Activated T-helper 1 cell treated with anti-CD3 and anti-CD28 coated beads, Interleukin-12 subunit alpha, Interleukin-12 subunit beta, Interleukin-2, Interleukin-4 antibody, amounts not matched to agents 30 ng/mL and 10 ng/mL and 1 ng/mL, durations not matched to agents 14 hours and 24 hours and 36 hours (primary cell): ENCODE measurements at regions of chr16 and their contacts with region 1.

Region 1: DNA sequence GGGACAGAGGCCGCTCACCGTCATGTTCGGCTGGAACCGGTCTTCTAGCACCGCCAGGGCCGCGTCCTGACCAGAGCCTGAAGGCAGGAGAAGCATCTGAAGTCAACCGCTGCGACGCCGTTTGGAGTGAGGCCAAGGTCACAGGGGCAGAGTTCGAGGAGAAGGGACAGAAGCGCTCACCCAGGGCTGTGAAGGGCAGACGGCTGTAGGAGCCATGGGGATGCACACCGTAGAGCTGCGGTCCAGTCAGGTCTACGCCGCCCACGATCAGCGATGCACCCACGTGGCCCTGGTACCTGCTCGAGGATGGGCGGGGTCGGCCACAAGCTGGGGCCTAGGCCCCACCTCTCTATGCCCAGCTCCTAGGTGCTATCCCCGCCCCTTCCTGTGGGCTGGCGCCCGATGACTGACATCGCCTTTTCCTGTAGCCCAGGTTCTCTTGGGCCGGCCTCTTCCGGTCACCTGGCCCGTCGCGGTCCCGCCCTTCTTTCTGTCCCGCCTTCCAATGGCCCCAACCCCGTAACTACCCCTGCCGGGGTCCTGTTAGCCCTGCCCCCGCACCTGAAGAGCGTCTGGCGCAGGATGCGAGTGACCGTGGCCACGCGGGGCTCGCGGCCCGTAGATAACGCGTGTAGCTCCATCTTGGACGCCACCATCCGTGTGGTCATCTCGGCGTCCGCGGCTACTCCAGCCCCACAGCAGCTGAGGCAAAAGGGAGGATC is 1.1 kb downstream of the PSMB10 start:
- DNase-seq: peak; percentile 92
- H3K4me3 Mint-ChIP-seq: peak overlapping the region; percentile 98
- H3K27ac Mint-ChIP-seq: peak overlapping the region; percentile 96
- H3K4me1 Mint-ChIP-seq: peaks cover 37% of the 10 kb centered on the region
- H3K27me3 Mint-ChIP-seq: no peaks in the 10 kb centered on the region

Region 2: DNA sequence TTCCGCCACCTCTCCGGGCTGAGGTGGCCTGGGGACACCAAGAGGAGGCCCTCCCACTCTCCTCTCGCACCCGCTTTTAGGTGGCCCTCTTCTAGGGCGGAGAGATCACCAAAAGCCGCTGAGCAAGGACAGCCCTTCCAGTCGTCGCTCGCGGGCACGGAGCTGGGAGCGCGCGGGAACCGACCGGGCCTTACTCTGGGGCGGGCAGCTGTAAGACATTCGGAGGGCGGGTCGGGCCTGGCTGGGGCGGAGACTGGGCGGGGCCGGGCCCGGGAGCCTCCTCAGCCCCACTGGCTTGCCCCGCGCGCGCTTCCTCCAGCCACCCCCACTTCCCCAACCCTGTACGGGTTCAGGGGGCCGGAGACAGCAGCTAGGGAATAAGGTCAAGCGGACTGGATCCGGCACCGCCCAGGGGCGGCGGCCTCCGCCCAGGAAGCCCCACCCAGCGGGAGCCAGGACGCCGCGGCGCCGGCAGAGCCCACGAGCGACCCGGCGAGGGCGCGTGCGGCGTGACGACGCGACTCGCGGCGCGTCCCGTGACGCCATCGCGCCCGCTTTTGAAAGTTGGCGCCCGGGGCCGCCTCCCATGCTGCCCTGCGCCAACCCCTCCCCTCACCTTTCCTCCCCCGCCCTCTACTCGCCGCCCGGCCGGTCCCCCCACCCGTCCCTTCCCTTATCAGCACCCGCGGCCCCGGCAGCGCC is 373.6 kb before region 1 on chr16:
- intact Hi-C with region 1: loop called (anchors 1 kb)
- DNase-seq: peak; percentile 98
- H3K4me3 Mint-ChIP-seq: peak overlapping the region; percentile 88
- H3K27ac Mint-ChIP-seq: peak overlapping the region; percentile 94
- H3K4me1 Mint-ChIP-seq: peaks cover 40% of the 10 kb centered on the region
- H3K27me3 Mint-ChIP-seq: no peaks in the 10 kb centered on the region

Region 3: DNA sequence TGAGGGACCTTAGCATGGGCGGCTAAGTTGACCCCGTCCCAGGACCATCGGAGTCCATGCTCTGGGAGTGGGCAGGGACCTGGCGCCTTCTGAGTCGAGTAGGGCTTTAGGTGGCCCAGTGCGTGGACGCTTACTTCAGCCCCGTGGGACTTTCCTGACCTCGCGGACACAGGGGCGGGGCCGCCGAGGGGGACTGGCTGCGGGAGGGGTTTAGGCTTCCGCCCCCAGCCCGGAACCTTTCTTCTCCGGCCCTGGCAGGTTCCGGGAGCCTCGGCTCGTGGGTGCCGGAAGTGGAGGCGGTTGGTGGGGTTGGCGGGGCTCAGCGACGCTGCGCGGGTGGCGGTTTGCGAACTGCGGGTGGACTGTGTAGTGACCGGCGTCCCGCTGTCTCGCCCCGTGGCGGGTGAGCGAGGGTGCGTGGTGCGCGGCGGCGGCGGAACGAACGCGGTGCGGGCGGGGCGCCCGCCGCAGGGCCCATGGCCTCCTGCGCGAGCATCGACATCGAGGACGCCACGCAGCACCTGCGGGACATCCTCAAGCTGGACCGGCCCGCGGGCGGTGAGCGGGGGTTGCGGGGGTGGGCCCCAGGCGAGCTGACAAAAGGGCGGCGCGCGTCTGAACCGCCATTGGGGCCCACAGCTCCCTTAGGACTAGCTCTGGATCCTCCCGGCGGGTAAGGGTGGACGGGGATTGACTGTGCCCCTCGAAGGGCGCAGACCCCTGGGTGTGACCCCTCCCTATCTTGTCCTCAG is 62.6 kb before region 1 on chr16 and contains the start of gene EDC4:
- intact Hi-C with region 1: loop called (anchors 1 kb)
- DNase-seq: peak; percentile 89
- H3K4me3 Mint-ChIP-seq: peak within 1 kb of the TSS; percentile 88
- H3K27ac Mint-ChIP-seq: peak within 1 kb of the TSS; percentile 81
- H3K4me1 Mint-ChIP-seq: peaks cover 35% of the 10 kb centered on the region
- H3K27me3 Mint-ChIP-seq: no peaks in the 10 kb centered on the region
- total RNA-seq, gene EDC4: 115 and 128 TPM in 2 replicates

Region 4: GRCh38 chr16:67883872-67884261 is 51.7 kb before region 1 on chr16:
- intact Hi-C with region 1: no loop called
- DNase-seq: peak; percentile 56
- H3K4me3 Mint-ChIP-seq: no peak overlapping the region
- H3K27ac Mint-ChIP-seq: no peak overlapping the region
- H3K4me1 Mint-ChIP-seq: no peaks in the 10 kb centered on the region
- H3K27me3 Mint-ChIP-seq: no peaks in the 10 kb centered on the region

Region 5: GRCh38 chr16:68022704-68023522 is 87.3 kb after region 1 on chr16 and contains the starts of genes DDX28 and DUS2:
- intact Hi-C with region 1: loop called (anchors 1 kb)
- DNase-seq: peak; percentile 93
- H3K4me3 Mint-ChIP-seq: peak within 1 kb of the TSS; percentile 100
- H3K27ac Mint-ChIP-seq: peak within 1 kb of the TSS; percentile 96
- H3K4me1 Mint-ChIP-seq: peaks cover 26% of the 10 kb centered on the region
- H3K27me3 Mint-ChIP-seq: no peaks in the 10 kb centered on the region
- total RNA-seq, gene DDX28: 28.2 and 28.4 TPM in 2 replicates
- total RNA-seq, gene DUS2: 34.7 and 37.2 TPM in 2 replicates

Region 6: GRCh38 chr16:68085259-68086071 is 149.9 kb after region 1 on chr16 and contains the start of gene NFATC3:
- intact Hi-C with region 1: loop called (anchors 5 kb)
- DNase-seq: peak; percentile 97
- H3K4me3 Mint-ChIP-seq: peak within 1 kb of the TSS; percentile 95
- H3K27ac Mint-ChIP-seq: peak within 1 kb of the TSS; percentile 96
- H3K4me1 Mint-ChIP-seq: peaks cover 73% of the 10 kb centered on the region
- H3K27me3 Mint-ChIP-seq: no peaks in the 10 kb centered on the region
- total RNA-seq, gene NFATC3: 152 and 157 TPM in 2 replicates

Region 7: GRCh38 chr16:68179196-68179795 is 243.7 kb after region 1 on chr16:
- intact Hi-C with region 1: no loop called
- DNase-seq: no peak
- H3K4me3 Mint-ChIP-seq: no peak overlapping the region
- H3K27ac Mint-ChIP-seq: no peak overlapping the region
- H3K4me1 Mint-ChIP-seq: no peaks in the 10 kb centered on the region
- H3K27me3 Mint-ChIP-seq: no peaks in the 10 kb centered on the region